ENCODE measurements at regions of chr16 and their contacts with region 1.

Region 1: DNA sequence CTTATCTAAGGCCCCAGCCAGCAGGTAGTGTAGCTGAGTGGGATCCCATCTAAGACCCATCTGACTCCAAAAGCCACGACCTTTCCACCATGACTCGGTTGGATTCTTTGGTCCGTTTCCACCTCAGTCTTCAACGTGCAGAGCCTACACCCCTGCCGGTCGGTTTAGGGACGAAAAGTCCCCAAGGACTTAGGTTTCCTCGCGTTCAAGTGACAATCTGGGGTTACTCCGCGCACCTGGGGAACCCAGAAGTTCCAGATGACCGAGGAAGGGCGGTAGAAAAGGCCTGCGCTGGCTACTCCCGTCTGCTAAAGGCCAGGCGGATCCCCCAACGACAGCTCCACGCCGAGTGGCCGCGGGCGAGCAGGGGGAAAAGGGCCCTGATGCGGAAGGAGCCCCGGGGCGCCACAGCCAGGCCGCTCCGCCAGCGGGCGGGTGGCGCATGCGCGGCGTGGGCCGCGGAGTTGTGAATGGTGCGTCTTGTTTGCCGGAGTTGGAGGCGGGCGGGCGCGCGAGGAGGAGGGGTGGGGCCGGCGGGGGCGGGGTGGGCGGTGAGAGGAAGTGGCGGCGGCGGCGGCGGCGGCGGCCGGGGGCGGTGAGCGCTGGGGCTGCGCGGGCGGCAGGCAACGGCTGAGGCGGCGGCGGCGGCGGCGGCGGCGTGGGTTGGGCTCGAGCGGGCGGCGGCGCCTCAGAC is at the start of gene CBFB:
- DNase-seq: peak; percentile 84 to 93 (median 88)
- H3K4me3 ChIP-seq: peak within 1 kb of the TSS; percentile 68 to 98 (median 88)
- H3K27ac ChIP-seq: peak within 1 kb of the TSS; percentile 92 to 99 (median 98)
- H3K27me3 ChIP-seq: no peaks in the 10 kb centered on the region
- CTCF ChIP-seq: peak in 20 of 56 donors; percentile 8 to 34 (median 18)
- total RNA-seq, gene CBFB: 16.0 to 71.3 (median 36.7) TPM

Region 2: GRCh38 chr16:66894948-66895688 is 133.6 kb before region 1 on chr16:
- intact Hi-C with region 1: loop called in 1 of 2 experiments (anchors 10 kb)
- DNase-seq: peak; percentile 34 to 84 (median 78)
- H3K4me3 ChIP-seq: no peak overlapping the region
- H3K27ac ChIP-seq: peak overlapping the region in 13 of 59 donors; percentile 0 to 66 (median 36)
- H3K27me3 ChIP-seq: no peaks in the 10 kb centered on the region
- CTCF ChIP-seq: peak; percentile 35 to 88 (median 77)

Region 3: GRCh38 chr16:67000384-67001351 is 28.0 kb before region 1 on chr16:
- intact Hi-C with region 1: loop called in 1 of 2 experiments (anchors 2 kb)
- DNase-seq: peak; percentile 62 to 80 (median 73)
- H3K4me3 ChIP-seq: peak overlapping the region; percentile 53 to 96 (median 81)
- H3K27ac ChIP-seq: peak overlapping the region; percentile 77 to 100 (median 98)
- H3K27me3 ChIP-seq: no peaks in the 10 kb centered on the region
- CTCF ChIP-seq: peak in 1 of 56 donors; percentile 4

Region 4: DNA sequence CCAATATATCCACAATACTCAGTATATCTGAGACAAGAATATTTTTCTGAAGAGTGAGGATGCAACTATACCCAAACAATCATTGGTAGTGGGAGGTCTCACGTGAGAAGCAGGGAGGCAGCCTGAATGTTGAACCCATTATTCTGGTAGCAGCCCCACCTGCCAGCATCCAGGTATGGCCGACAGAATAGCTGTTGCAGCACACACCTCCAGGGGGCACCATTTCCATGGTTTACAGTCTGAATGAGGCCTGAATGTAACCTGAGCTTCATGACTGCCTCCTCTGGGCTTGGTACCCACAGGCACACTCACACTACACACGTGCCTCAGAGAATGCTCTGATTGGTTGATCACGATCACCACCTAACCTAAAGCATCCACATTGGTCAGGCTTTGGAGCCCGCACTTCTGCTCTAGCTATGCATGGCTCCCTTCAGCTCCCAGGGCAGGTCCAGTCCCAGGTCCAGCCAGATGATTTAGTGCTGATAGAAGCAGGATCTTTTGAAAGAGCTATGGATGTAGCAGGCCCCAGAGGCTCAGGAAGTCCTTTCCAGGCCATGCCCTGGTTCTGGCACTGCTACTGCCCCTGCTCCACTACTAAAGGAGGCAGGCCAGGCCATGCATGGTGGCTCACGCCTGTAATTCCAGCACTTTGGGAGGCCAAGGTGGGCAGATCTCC is 10.8 kb before region 1 on chr16:
- intact Hi-C with region 1: loop called (anchors 1 to 2 kb)
- DNase-seq: peak; percentile 15 to 86 (median 64)
- H3K4me3 ChIP-seq: no peak overlapping the region
- H3K27ac ChIP-seq: peak overlapping the region in 7 of 59 donors; percentile 6 to 61 (median 34)
- H3K27me3 ChIP-seq: no peaks in the 10 kb centered on the region
- CTCF ChIP-seq: peak; percentile 54 to 89 (median 74)

Region 5: DNA sequence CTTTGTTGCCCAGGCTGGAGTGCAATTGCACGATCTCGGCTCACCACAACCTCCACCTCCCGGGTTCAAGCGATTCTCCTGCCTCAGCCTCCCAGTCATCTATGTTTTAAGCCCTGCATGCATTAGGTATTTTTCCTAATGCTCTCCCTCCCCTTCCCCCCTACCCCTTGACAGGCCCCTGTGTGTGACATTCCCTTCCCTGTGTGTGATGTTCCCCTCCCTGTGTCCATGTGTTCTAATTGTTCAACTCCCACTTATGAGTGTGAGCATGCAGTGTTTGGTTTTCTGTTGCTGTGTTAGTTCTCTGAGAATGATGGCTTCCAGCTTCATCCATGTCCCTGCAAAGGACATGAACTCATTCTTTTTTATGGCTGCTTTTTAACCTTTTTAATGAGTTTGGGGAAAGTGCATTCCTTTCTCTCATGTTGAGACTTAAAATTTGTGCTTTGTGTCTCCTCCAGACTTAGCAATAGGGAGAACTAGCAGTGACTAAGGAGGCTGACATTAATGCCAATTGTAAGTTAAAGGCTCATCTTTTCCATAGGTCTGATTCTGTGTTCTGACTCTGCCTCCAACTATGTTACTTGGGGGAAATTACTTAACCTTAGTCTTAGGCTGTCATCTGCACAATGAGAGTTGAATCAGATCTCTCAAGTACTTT is 63.3 kb after region 1 on chr16:
- intact Hi-C with region 1: no loop called
- DNase-seq: no peak
- H3K4me3 ChIP-seq: no peak overlapping the region
- H3K27ac ChIP-seq: no peak overlapping the region
- H3K27me3 ChIP-seq: no peaks in the 10 kb centered on the region
- CTCF ChIP-seq: no peak

Region 6: GRCh38 chr16:67109407-67110135 is 80.9 kb after region 1 on chr16 and contains the start of gene PHAF1:
- intact Hi-C with region 1: loop called (anchors 2 to 5 kb)
- DNase-seq: peak; percentile 87 to 98 (median 94)
- H3K4me3 ChIP-seq: peak within 1 kb of the TSS; percentile 43 to 100 (median 97)
- H3K27ac ChIP-seq: peak within 1 kb of the TSS; percentile 45 to 97 (median 90)
- H3K27me3 ChIP-seq: no peaks in the 10 kb centered on the region
- CTCF ChIP-seq: peak in 32 of 56 donors; percentile 3 to 54 (median 32)
- total RNA-seq, gene PHAF1: 19.1 to 43.4 (median 33.0) TPM

Measured in dorsolateral prefrontal cortex (tissue), 120 donors.